Tibial artery (tissue), 4 donors: ENCODE measurements at regions of chr9 and their contacts with region 1.

Region 1: GRCh38 chr9:22008736-22009562 is at the start of gene CDKN2B:
- DNase-seq: peak; percentile 91 to 99
- H3K4me3 ChIP-seq: peak within 1 kb of the TSS; percentile 88 to 92
- H3K27ac ChIP-seq: peak within 1 kb of the TSS; percentile 89 to 96
- H3K4me1 ChIP-seq: peaks cover 0 to 14% (median 3%) of the 10 kb centered on the region in 4 donors
- H3K27me3 ChIP-seq: peaks cover 0 to 9% of the 10 kb centered on the region in 2 donors
- CTCF ChIP-seq: peak; percentile 85 to 90

Region 2: DNA sequence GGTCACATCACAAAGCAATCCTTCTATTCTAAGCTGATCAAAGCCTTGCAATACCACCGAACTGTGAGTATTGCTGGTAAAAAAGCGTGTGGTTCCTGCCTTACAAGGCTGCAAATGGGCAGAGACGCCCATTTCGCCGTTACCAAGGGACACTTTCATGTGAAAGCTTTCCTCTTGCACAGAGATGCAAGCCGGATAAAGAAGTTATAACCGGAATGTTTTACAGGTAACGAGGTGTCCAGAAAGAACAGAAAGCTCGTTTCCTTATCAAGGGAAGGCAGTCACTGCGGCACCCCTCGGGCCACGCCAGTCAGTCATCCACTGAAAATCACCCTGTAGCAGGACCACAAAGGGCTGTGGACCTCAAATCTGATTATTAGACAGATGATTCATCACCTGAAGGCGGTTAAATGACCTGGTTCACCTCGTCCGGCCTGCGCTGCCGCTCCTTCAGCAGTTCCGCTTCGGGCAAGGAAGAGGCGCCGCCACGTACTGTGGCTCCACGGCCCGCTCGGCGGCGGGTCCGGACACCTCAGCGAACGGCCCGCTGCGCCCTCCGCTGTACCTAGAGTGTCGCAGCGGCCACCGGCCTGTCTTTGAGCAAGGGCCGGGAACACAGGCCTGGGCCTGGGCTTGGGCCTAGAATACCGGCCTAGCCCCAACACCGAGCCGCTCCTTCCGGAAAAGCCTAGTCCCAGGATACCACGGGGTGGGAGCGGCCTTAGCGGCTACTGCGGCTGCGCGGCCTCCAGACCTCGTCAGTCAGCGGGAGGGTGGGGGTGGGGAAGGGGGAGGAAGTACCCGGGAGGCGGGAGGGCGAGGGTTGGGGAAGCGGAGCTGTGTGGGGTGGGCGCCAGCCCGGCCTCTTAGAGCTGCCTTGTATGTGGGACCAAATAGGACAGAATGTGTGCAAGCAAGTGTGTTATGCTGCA is 674.0 kb before region 1 on chr9 and contains the start of gene KLHL9:
- intact Hi-C with region 1: loop called (anchors 10 kb)
- DNase-seq: peak; percentile 90 to 96
- H3K4me3 ChIP-seq: peak within 1 kb of the TSS; percentile 71 to 99
- H3K27ac ChIP-seq: peak within 1 kb of the TSS; percentile 89 to 99
- H3K4me1 ChIP-seq: peaks cover 0 to 48% (median 31%) of the 10 kb centered on the region in 4 donors
- H3K27me3 ChIP-seq: no peaks in the 10 kb centered on the region
- CTCF ChIP-seq: no peak

Region 3: GRCh38 chr9:21825637-21826036 is 183.3 kb before region 1 on chr9:
- intact Hi-C with region 1: no loop called
- DNase-seq: no peak
- H3K4me3 ChIP-seq: no peak overlapping the region
- H3K27ac ChIP-seq: no peak overlapping the region
- H3K4me1 ChIP-seq: no peaks in the 10 kb centered on the region
- H3K27me3 ChIP-seq: no peaks in the 10 kb centered on the region
- CTCF ChIP-seq: no peak

Region 4: DNA sequence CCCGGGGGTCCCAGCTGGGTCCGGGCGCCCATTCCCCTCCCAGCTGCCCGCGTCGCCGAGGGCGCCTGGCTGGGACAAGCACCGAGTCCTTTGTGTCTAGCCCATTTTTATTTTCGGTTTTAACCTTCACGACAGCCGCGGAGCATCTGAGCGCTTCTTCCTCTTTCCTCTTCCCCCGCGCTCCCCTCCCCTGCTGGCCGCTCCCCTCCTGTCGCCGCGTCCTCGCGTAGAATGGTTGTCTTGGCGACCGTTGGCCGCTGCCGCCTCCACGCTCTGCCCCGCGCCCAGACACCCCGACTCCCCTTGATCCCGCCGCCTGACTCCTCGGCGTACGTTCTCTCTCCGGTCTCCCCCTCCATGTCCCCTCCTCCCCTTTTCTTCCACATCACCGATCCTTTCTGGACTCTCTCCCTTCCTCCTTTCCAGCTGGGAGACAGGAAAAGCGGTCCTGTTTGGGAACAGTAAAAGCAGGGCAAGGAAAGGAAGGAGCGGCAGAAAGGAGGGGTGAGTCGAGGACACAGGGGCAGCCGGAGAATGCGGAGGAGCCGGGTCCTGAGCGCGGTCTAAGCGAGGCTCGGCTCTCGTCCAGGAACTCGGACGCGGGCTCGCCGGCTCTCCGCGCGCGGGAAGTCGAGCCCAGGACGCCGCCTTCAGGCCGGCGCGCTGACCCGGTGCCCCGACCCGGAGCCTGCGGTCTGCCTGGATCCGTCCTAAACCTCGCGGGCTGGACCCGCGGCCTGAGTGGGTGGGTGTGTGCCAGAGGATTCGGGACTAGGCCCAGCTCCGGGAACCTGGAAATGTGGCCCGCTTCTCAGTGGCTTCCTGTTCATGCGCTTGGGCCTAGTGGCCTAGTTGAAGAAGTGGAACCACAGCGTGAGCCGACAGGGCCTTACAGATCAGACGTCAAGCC is 13.5 kb before region 1 on chr9:
- intact Hi-C with region 1: loop called (anchors 2 kb)
- DNase-seq: peak; percentile 63 to 84
- H3K4me3 ChIP-seq: peak overlapping the region; percentile 79 to 86
- H3K27ac ChIP-seq: peak overlapping the region; percentile 73 to 75
- H3K4me1 ChIP-seq: peaks cover 0 to 14% (median 8%) of the 10 kb centered on the region in 4 donors
- H3K27me3 ChIP-seq: peaks cover 0 to 12% of the 10 kb centered on the region in 2 donors
- CTCF ChIP-seq: peak in 1 of 2 experiments; percentile 23